Activated T-helper 2 cell treated with anti-CD3 and anti-CD28 coated beads, Interferon-gamma antibody, Interleukin-2, Interleukin-4, amounts not matched to agents 10 μg/mL and 5 μg/mL and 100 μg/mL, durations not matched to agents 14 hours and 24 hours and 36 hours (primary cell): ENCODE measurements at regions of chr1 and their contacts with region 1.

Region 1: GRCh38 chr1:228275739-228276421 is 68.0 kb downstream of the OBSCN start:
- DNase-seq: peak; percentile 83
- H3K4me3 Mint-ChIP-seq: peak overlapping the region; percentile 67
- H3K27ac Mint-ChIP-seq: no peak overlapping the region
- H3K4me1 Mint-ChIP-seq: peaks cover 4% of the 10 kb centered on the region
- H3K27me3 Mint-ChIP-seq: no peaks in the 10 kb centered on the region

Region 2: GRCh38 chr1:228212966-228213844 is 62.7 kb before region 1 on chr1:
- intact Hi-C with region 1: loop called (anchors 1 kb)
- DNase-seq: peak; percentile 82
- H3K4me3 Mint-ChIP-seq: peak overlapping the region; percentile 89
- H3K27ac Mint-ChIP-seq: peak overlapping the region; percentile 93
- H3K4me1 Mint-ChIP-seq: peaks cover 4% of the 10 kb centered on the region
- H3K27me3 Mint-ChIP-seq: no peaks in the 10 kb centered on the region